ENCODE measurements at regions of chr12 and their contacts with region 1.

Region 1: DNA sequence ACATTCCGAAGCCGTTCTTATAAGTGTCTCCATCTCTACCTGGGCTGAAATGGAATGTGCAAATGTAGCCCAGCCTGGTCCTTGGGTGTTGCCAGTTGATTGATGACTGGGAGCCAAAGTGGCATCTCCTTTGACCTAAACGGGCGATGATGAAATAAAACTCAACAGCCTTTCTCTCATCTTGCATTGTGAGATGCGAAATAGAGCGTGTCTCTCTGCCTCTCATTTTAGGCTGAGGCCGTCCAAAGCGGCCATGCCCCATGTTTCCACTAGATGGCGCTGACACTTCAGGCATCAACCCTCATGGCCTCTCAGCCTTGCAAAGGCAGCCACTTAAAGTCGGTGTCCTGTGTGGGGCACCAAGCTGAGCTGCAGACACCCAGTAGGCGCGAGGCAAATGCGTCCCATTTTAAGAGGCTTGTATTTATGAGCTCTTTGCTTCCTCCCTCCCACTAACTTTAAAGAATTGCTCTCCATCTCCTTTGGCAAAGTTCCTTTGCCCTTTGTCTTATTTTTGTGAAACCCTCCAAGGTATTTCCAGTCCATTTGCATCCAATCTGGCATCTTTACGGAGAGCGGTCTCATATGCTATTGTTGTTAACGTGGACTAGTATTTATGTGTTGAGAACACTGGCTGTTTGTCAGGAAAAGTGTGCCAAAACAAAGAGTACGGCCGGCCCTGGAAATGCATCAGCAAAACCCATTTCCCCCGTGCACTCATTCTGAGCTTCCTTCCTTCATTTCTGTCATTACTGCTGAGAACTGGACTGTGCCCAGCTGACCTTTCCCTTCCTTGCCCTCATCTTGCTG is 25.0 kb downstream of the GPRC5A start:
- DNase-seq: peak; percentile 79 to 89 (median 87)
- H3K4me3 ChIP-seq: peak overlapping the region in 5 of 7 experiments; percentile 19 to 55 (median 46)
- H3K27ac ChIP-seq: no peak overlapping the region
- H3K4me1 ChIP-seq: peaks cover 0 to 26% (median 22%) of the 10 kb centered on the region in 4 experiments
- H3K27me3 ChIP-seq: no peaks in the 10 kb centered on the region

Region 2: GRCh38 chr12:12425616-12426015 is 490.7 kb before region 1 on chr12:
- CTCF ChIA-PET with region 1: no interaction called
- POLR2A ChIA-PET with region 1: no interaction called
- DNase-seq: no peak
- H3K4me3 ChIP-seq: no peak overlapping the region
- H3K27ac ChIP-seq: no peak overlapping the region
- H3K4me1 ChIP-seq: no peaks in the 10 kb centered on the region
- H3K27me3 ChIP-seq: no peaks in the 10 kb centered on the region

Region 3: GRCh38 chr12:12975322-12976077 is 59.2 kb after region 1 on chr12:
- CTCF ChIA-PET with region 1: interaction called, 11 read pairs
- POLR2A ChIA-PET with region 1: no interaction called
- DNase-seq: peak; percentile 30 to 41 (median 39)
- H3K4me3 ChIP-seq: no peak overlapping the region
- H3K27ac ChIP-seq: no peak overlapping the region
- H3K4me1 ChIP-seq: no peaks in the 10 kb centered on the region
- H3K27me3 ChIP-seq: no peaks in the 10 kb centered on the region

Region 4: GRCh38 chr12:12983420-12984035 is 67.2 kb after region 1 on chr12:
- CTCF ChIA-PET with region 1: interaction called, 22 read pairs
- POLR2A ChIA-PET with region 1: no interaction called
- DNase-seq: peak; percentile 31 to 58 (median 57)
- H3K4me3 ChIP-seq: no peak overlapping the region
- H3K27ac ChIP-seq: no peak overlapping the region
- H3K4me1 ChIP-seq: no peaks in the 10 kb centered on the region
- H3K27me3 ChIP-seq: no peaks in the 10 kb centered on the region

Region 5: DNA sequence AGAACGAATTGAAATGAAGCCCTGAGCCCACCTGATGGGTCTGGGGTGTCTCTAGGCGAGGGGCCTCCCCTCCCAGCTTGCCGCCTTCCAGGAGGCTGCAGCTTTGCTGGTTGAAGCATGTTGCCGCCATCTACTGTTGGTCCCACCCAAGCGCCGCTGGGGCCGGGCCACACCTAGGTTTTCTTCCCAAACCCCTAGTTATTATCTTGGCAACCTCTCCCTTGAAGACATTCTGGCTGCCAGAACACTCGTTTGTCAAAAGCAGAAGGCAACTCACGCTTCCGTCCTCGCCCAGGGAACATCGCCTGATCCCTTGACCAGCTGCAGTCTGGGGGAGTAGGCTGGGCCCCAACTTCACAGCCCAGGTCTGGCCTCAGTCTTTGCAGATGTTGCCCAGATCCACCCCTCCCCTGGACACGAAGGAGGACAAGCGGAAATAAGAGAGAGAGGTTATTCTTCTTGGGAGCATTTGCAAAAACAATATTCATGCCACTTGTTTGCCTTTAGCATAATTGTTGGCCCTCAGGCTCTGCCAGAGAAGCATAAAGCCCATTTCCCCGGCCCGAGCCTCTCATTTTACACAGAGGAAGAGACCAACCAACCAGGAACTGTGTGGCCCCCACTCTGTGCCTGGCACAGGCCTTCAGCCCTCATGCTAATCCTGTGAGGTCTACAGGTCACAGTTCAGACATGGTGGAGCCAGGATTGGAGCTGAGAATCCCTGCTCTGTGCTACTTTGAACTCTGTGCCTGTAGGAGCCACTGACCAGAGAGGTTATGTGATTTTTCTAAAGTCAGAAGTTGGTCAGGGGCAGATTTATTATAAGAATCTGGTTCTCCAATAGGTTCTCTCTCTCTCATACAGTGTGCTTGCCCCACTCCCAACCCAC is 286.9 kb after region 1 on chr12:
- CTCF ChIA-PET with region 1: interaction called, 174 read pairs
- POLR2A ChIA-PET with region 1: no interaction called
- DNase-seq: peak; percentile 25 to 53 (median 40)
- H3K4me3 ChIP-seq: no peak overlapping the region
- H3K27ac ChIP-seq: no peak overlapping the region
- H3K4me1 ChIP-seq: peaks cover 16 to 98% (median 79%) of the 10 kb centered on the region in 4 experiments
- H3K27me3 ChIP-seq: no peaks in the 10 kb centered on the region

Region 6: DNA sequence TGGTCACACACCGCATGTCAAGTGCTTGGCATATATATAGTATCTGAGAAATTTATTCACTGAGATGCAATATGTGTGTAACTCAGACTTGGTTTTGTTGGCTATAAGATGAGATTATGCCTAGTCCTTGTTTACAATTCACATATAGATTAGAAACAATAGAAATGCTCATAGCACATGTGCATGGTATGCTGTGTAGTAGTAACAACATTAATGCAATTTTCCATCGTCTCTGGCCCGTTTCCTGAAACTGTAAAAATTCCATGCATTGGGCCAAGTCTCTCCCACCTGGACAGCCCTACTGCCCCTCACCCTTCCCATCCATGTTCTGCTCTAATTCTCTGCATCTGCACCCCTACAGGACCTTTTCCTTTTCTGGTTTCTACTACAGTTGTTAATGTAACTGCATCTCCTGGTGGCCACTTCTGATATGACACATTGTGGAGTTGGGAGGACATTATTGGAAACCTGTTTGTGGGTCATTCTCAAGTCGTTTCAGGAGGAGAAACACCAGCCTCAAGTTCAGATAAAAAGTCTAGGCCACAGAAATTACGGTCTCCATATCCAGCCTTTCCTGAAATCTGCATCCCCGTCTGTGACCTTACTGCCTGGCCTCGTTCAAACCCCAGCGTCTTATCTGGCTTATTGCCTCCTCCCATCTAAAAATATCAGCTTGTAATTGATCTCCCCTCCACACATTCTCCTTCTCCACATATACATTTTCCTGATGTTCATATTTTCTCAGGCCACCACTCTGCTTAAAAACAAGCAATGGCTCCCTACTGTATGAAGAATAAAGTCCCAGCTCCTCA is 317.7 kb after region 1 on chr12:
- CTCF ChIA-PET with region 1: interaction called, 21 read pairs
- POLR2A ChIA-PET with region 1: no interaction called
- DNase-seq: peak; percentile 54 to 72 (median 64)
- H3K4me3 ChIP-seq: no peak overlapping the region
- H3K27ac ChIP-seq: no peak overlapping the region
- H3K4me1 ChIP-seq: no peaks in the 10 kb centered on the region
- H3K27me3 ChIP-seq: no peaks in the 10 kb centered on the region

Measured in common myeloid progenitor, CD34-positive (primary cell).